ENCODE measurements at regions of chr2 and their contacts with region 1.

Region 1: DNA sequence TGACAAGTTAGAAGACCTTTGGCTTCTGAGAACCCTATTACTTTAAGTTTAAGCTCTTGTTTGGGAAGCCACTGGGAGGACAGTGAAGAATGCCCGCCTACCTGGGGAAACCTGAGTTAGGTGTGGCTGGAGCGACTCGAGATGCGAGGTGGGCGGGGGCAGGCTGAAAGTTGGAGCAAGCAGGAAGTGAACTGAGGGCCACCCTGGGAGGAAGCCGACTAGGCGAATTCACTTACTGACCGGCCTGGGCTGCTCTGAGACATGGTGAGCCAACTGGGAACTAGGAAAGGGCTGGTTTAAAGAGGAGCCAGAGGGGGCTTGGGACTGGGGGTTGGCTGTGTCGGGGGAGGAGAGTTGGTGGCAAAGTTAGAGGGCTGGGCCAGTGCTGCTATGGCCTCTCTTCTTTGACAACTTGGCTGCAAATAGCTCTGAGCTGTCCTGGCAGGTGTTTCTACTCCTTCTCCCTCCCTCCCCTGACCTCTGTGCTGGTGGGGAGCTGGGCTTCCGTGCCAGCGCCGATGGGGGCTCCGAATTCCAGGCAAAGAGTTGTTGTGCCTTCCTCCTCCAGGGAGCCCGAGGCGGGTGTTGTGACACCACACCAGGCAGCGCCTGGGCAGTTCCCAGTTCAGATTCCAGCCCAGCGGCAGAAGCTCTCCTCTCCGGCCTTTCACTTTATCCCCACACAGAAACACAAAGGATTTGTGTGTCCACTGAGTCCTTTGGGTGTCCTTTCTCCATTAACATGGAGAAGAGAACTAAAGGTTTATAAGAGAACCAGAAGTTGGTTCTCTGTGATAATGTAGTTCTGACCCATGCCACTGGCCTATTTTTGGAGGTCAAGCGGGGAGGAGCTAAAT is at the start of gene VAMP8:
- DNase-seq: peak; percentile 56
- ATAC-seq: peak; percentile 76
- H3K4me3 Mint-ChIP-seq: peak within 1 kb of the TSS; percentile 94
- H3K27ac Mint-ChIP-seq: peak within 1 kb of the TSS; percentile 93
- H3K4me1 Mint-ChIP-seq: peaks cover 37% of the 10 kb centered on the region
- H3K27me3 Mint-ChIP-seq: no peaks in the 10 kb centered on the region
- CTCF ChIP-seq: no peak
- total RNA-seq, gene VAMP8: 128 and 145 TPM in 2 replicates

Region 2: DNA sequence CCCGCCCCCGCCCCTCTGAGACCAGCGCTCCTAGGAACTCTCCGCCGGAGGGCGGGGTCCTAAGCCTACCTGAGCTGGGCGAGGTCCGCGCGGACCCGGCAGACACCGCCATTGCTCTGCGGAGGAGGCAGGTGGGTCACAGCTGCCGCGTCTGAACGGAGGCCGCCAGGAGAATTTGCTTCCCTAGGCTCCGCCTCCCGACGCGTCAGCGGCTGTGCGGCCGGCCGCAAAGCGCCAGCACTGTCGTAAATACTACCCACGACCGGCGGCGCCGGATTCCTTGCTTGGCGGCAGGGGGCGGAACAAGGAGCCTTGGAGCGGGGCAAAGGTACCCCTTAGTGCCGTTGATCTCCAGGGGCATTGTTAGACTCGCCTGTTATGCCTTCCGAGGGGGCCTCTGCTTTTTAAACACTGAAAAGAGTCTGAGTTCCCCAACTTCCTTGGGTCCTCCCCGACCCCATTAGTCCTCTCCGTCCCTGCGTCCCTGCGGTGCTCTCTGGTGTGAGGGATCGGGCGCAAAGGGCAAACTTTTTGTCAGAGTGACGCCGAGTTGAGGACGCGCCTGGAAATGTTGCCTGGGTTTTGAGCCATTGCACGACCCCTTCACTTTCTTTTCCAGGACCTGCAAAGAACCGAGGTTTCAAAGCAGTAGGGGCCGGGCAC is 16.2 kb before region 1 on chr2 and contains the start of gene GGCX:
- CTCF ChIA-PET with region 1: no interaction called
- POLR2A ChIA-PET with region 1: interaction called, 16 read pairs
- intact Hi-C with region 1: loop called (anchors 1 kb)
- DNase-seq: peak; percentile 84
- ATAC-seq: peak; percentile 88
- H3K4me3 Mint-ChIP-seq: peak within 1 kb of the TSS; percentile 98
- H3K27ac Mint-ChIP-seq: peak within 1 kb of the TSS; percentile 98
- H3K4me1 Mint-ChIP-seq: peaks cover 38% of the 10 kb centered on the region
- H3K27me3 Mint-ChIP-seq: no peaks in the 10 kb centered on the region
- CTCF ChIP-seq: no peak
- total RNA-seq, gene GGCX: 30.0 and 30.7 TPM in 2 replicates

Region 3: DNA sequence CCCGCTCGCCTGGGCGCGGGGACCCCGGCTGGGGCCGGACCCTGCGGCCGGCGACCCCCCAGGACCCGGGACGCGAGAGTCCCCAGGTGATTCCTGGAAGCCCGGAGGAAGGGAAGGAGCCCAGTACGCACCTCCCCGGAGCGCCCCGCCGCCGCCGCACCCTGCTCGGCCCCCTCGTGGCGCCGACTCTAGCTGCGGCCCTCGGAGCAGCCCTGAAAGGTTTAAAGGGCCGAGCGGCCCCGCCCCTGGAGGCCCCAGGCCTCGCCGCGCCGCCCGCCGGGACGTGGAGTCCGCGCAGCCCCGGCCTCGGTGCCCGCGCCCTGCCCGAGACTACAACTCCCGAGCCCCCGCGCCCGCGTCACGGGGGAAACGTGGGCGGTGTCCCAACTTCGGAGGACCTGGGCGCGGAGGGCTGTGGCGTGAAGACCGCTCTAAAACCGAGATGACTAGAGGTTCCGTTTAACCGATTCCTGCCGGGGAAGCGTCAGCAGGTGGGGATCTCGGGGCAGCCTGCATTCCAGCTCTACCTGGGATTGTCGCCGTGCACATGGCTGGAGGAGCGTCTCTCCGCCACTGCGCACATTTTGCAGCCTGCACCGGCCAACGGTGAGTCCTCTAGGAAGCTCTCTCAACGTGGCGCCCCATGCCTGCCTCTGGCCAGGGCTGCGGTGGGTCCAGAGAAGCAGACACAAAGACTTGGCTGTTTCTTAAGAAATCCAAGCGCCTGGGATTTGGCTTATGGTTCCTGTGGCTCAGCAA is 25.0 kb after region 1 on chr2 and contains the start of gene TMEM150A:
- CTCF ChIA-PET with region 1: no interaction called
- POLR2A ChIA-PET with region 1: interaction called, 7 read pairs
- intact Hi-C with region 1: loop called (anchors 1 kb)
- DNase-seq: peak; percentile 91
- ATAC-seq: peak; percentile 97
- H3K4me3 Mint-ChIP-seq: peak within 1 kb of the TSS; percentile 90
- H3K27ac Mint-ChIP-seq: peak within 1 kb of the TSS; percentile 84
- H3K4me1 Mint-ChIP-seq: peaks cover 31% of the 10 kb centered on the region
- H3K27me3 Mint-ChIP-seq: no peaks in the 10 kb centered on the region
- CTCF ChIP-seq: no peak
- total RNA-seq, gene TMEM150A: 13.2 and 15.0 TPM in 2 replicates

Region 4: DNA sequence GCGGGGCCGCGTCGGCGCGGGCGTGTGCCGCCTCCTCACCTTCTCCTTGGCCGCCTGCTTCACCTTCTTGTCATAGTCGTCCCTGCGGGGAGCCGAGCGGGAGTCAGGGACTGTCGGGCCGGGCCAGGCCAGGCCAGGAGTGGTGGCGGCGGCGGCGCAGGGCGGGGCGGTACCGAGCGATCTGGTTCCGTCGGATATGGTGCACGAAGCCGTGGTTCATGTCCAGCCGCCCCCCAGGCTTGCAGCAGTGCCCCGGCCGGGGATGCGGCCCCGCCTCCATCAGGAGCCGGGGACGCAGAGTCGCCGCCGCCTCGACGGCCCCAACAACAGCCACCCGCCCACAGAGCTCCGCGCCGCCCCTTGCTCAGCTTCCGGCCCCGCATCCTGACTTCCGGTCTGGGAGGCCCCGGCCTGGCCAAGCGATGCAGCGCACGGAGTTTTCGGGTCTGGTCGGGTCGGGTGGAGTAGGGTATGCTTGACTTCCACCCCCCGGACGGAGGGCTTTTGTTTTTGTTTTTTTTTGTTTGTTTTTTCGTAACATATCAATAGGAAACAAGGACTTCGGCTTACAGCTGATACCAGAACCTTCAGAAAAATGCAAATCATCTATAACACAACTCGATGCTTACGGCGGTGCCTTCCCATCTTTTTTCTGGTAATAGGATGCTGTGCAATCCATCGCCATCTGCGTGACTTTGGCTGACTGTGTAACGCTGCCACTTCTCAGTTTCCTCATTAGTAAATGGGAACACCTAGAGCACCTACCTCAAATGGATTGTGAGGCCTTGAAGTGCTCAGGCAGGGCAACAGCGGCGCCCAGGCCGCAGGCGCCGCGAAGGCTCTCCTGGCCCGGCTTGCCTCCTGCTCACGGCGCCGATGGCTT is 34.3 kb after region 1 on chr2 and contains the start of gene C2orf68:
- CTCF ChIA-PET with region 1: no interaction called
- POLR2A ChIA-PET with region 1: interaction called, 10 read pairs
- intact Hi-C with region 1: loop called (anchors 2 kb)
- DNase-seq: peak; percentile 81
- ATAC-seq: peak; percentile 73
- H3K4me3 Mint-ChIP-seq: peak within 1 kb of the TSS; percentile 98
- H3K27ac Mint-ChIP-seq: peak within 1 kb of the TSS; percentile 91
- H3K4me1 Mint-ChIP-seq: peaks cover 39% of the 10 kb centered on the region
- H3K27me3 Mint-ChIP-seq: no peaks in the 10 kb centered on the region
- CTCF ChIP-seq: no peak
- total RNA-seq, gene C2orf68: 49.7 and 61.5 TPM in 2 replicates